Activated T-helper 2 cell treated with anti-CD3 and anti-CD28 coated beads, Interferon-gamma antibody, Interleukin-2, Interleukin-4, amounts not matched to agents 10 μg/mL and 5 μg/mL and 100 μg/mL, durations not matched to agents 14 hours and 24 hours and 36 hours (primary cell): ENCODE measurements at regions of chr15 and their contacts with region 1.

Region 1: DNA sequence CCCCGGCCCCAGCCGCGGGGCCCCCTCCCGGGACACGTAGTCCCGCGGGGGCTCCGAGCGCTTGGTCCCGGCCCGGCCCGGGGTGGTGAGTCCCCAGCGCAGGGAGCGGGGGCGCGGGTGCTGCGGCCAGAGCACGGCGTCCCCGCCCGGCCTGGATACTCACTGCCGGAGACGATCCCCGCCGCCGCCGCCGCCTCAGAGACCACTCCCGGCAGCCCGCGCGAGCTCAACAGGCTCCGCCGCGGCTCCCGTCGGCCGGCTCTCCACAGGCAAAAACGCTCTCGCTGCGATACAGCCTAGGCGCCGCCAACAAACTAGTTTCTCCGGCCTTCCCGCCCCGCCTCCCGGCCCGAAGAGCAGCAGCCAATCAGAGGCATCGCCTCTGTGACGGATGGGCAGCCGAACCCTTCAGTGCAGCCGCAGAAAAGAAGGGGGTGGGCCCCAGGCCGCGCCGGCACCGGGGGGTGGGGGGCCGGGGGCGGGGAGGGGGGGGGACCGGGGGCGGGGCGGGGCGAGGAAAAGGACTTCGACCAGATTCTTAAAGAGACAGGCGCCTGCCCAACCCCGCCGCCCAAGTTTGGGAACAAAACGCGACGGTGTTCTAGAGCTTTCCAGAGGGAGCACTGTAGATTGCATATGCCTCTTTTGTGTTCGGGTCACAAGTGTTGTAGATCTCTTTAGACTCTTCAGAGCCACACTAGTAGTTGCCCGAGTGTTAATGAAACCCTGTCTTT is at the start of gene KLHL25:
- DNase-seq: peak; percentile 92
- H3K4me3 Mint-ChIP-seq: peak within 1 kb of the TSS; percentile 89
- H3K27ac Mint-ChIP-seq: peak within 1 kb of the TSS; percentile 82
- H3K4me1 Mint-ChIP-seq: peaks cover 23% of the 10 kb centered on the region
- H3K27me3 Mint-ChIP-seq: no peaks in the 10 kb centered on the region
- total RNA-seq, gene KLHL25: 8.5 and 9.0 TPM in 2 replicates

Region 2: GRCh38 chr15:85688711-85689110 is 106.1 kb before region 1 on chr15:
- intact Hi-C with region 1: no loop called
- DNase-seq: no peak
- H3K4me3 Mint-ChIP-seq: peak overlapping the region; percentile 94
- H3K27ac Mint-ChIP-seq: peak overlapping the region; percentile 100
- H3K4me1 Mint-ChIP-seq: peaks cover 70% of the 10 kb centered on the region
- H3K27me3 Mint-ChIP-seq: no peaks in the 10 kb centered on the region

Region 3: DNA sequence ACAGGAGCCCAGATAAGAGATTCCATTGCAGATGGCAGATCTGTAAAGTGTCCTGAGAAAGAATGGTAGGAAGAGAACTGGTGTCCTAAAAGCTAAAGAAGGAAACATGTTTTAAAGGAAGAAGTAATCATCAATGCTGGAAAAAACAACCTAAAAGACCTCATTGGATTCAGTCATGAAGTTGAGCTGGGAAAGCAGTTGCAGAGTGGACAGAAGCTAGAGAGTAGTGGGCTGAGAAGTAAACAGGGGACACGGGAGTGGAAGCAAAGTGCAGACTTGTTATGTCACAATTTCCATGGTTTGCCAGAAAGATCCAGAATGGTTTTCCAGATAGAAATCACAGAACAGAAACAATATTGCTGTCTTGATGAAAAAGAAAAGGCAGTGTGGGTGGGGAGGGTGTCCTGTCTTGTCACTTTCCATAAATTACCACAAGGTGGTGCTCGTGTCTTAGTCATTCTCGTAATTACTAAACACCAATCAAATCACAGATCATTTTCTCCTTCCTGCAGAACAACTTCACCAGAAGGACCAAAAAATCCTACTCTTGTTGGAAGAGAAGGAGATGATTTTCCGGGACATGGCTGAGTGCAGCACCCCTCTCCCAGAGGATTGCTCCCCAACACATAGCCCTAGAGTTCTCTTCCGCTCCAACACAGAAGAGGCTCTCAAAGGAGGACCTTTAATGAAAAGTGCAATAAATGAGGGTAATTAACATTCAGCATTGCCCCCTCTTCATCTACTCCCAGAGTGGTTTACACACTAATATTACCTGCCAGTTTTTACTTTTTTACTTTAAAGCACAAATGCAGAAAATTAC is 64.6 kb before region 1 on chr15:
- intact Hi-C with region 1: loop called (anchors 5 kb)
- DNase-seq: peak; percentile 30
- H3K4me3 Mint-ChIP-seq: no peak overlapping the region
- H3K27ac Mint-ChIP-seq: peak overlapping the region; percentile 20
- H3K4me1 Mint-ChIP-seq: peaks cover 23% of the 10 kb centered on the region
- H3K27me3 Mint-ChIP-seq: no peaks in the 10 kb centered on the region